OCI-LY7 (cell line): ENCODE measurements at regions of chr17 and their contacts with region 1.

Region 1: GRCh38 chr17:82098072-82098821 is at the start of gene FASN:
- DNase-seq: peak; percentile 100
- H3K4me3 ChIP-seq: peak within 1 kb of the TSS; percentile 87
- H3K27ac ChIP-seq: peak within 1 kb of the TSS; percentile 89
- H3K4me1 ChIP-seq: peaks cover 46% of the 10 kb centered on the region
- CTCF ChIP-seq: peak; percentile 70
- total RNA-seq, gene FASN: 94.4 and 111 TPM in 2 replicates

Region 2: GRCh38 chr17:81512560-81513371 is 585.5 kb before region 1 on chr17 and contains the start of gene ACTG1:
- CTCF ChIA-PET with region 1: no interaction called
- POLR2A ChIA-PET with region 1: no interaction called
- intact Hi-C with region 1: loop called (anchors 5 kb)
- DNase-seq: peak; percentile 98
- H3K4me3 ChIP-seq: peak within 1 kb of the TSS; percentile 90
- H3K27ac ChIP-seq: peak within 1 kb of the TSS; percentile 89
- H3K4me1 ChIP-seq: peaks cover 58% of the 10 kb centered on the region
- CTCF ChIP-seq: no peak
- total RNA-seq, gene ACTG1: 2,245 and 2,707 TPM in 2 replicates

Region 3: GRCh38 chr17:81683584-81684237 is 414.5 kb before region 1 on chr17 and contains the starts of genes ARL16 and HGS:
- CTCF ChIA-PET with region 1: no interaction called
- POLR2A ChIA-PET with region 1: no interaction called
- intact Hi-C with region 1: loop called (anchors 5 kb)
- DNase-seq: peak; percentile 100
- H3K4me3 ChIP-seq: peak within 1 kb of the TSS; percentile 78
- H3K27ac ChIP-seq: peak within 1 kb of the TSS; percentile 41
- H3K4me1 ChIP-seq: peaks cover 23% of the 10 kb centered on the region
- CTCF ChIP-seq: no peak
- total RNA-seq, gene ARL16: 86.1 and 86.4 TPM in 2 replicates
- total RNA-seq, gene HGS: 120 and 162 TPM in 2 replicates

Region 4: DNA sequence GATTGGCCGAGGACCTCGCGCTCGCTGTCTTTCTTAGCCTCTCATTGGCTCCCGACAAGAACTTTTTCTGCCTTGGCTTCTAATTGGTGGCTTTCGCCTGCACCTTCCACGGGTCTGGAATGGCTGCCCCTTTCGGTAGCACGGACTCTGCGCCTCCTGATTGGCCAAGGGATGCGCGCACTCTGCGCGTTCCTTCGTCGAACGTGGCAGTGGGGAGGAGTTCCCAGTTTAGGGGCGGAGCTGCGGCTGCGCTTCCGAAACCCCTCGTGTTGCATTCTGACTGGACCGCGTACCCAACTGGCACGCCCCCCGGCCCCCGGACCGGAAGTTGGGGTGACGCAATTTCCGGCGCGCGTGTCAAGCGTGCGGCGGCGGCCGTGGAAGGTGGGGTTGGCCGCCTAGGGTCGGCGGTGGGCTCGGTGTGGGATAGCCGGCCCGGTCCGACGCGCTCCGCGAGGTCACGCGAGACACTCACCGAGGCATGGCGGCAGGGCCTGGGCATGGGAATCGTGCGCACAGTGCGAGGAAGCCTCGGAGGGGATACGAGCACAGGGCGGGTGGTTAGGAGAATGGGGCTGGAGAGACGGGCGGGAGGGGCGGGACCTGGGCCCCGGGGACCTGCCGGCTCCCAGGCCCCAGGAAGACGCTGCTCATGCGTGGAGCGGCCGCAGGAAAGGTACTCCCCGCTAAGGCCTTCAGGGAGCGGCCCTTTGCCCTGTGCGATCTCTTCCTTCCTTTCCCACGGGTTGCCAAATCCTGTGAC is 237.3 kb before region 1 on chr17:
- CTCF ChIA-PET with region 1: no interaction called
- POLR2A ChIA-PET with region 1: no interaction called
- intact Hi-C with region 1: loop called (anchors 1 kb)
- DNase-seq: peak; percentile 100
- H3K4me3 ChIP-seq: peak overlapping the region; percentile 77
- H3K27ac ChIP-seq: peak overlapping the region; percentile 68
- H3K4me1 ChIP-seq: peaks cover 44% of the 10 kb centered on the region
- CTCF ChIP-seq: no peak

Region 5: GRCh38 chr17:82022981-82023374 is 75.3 kb before region 1 on chr17 and contains the start of gene LRRC45:
- CTCF ChIA-PET with region 1: no interaction called
- POLR2A ChIA-PET with region 1: interaction called, 4 read pairs
- intact Hi-C with region 1: loop called (anchors 1 kb)
- DNase-seq: peak; percentile 100
- H3K4me3 ChIP-seq: peak within 1 kb of the TSS; percentile 94
- H3K27ac ChIP-seq: peak within 1 kb of the TSS; percentile 44
- H3K4me1 ChIP-seq: peaks cover 30% of the 10 kb centered on the region
- CTCF ChIP-seq: no peak
- total RNA-seq, gene LRRC45: 52.0 and 62.6 TPM in 2 replicates

Region 6: GRCh38 chr17:82037113-82037888 is 60.9 kb before region 1 on chr17 and contains the start of gene DCXR:
- CTCF ChIA-PET with region 1: interaction called, 3 read pairs
- POLR2A ChIA-PET with region 1: interaction called, 4 read pairs
- intact Hi-C with region 1: loop called (anchors 1 kb)
- DNase-seq: peak; percentile 99
- H3K4me3 ChIP-seq: peak within 1 kb of the TSS; percentile 72
- H3K27ac ChIP-seq: peak within 1 kb of the TSS; percentile 70
- H3K4me1 ChIP-seq: peaks cover 19% of the 10 kb centered on the region
- CTCF ChIP-seq: peak; percentile 91
- total RNA-seq, gene DCXR: 138 and 147 TPM in 2 replicates

Region 7: GRCh38 chr17:82077617-82078358 is 20.5 kb before region 1 on chr17:
- CTCF ChIA-PET with region 1: no interaction called
- POLR2A ChIA-PET with region 1: no interaction called
- intact Hi-C with region 1: loop called (anchors 1 kb)
- DNase-seq: no peak
- H3K4me3 ChIP-seq: no peak overlapping the region
- H3K27ac ChIP-seq: no peak overlapping the region
- H3K4me1 ChIP-seq: peaks cover 25% of the 10 kb centered on the region
- CTCF ChIP-seq: no peak

Region 8: GRCh38 chr17:82120148-82120547 is 21.9 kb after region 1 on chr17:
- CTCF ChIA-PET with region 1: no interaction called
- POLR2A ChIA-PET with region 1: no interaction called
- intact Hi-C with region 1: no loop called
- DNase-seq: no peak
- H3K4me3 ChIP-seq: no peak overlapping the region
- H3K27ac ChIP-seq: no peak overlapping the region
- H3K4me1 ChIP-seq: peaks cover 7% of the 10 kb centered on the region
- CTCF ChIP-seq: no peak